Gastrocnemius medialis (tissue), 4 donors: ENCODE measurements at regions of chr11 and their contacts with region 1.

Region 1: DNA sequence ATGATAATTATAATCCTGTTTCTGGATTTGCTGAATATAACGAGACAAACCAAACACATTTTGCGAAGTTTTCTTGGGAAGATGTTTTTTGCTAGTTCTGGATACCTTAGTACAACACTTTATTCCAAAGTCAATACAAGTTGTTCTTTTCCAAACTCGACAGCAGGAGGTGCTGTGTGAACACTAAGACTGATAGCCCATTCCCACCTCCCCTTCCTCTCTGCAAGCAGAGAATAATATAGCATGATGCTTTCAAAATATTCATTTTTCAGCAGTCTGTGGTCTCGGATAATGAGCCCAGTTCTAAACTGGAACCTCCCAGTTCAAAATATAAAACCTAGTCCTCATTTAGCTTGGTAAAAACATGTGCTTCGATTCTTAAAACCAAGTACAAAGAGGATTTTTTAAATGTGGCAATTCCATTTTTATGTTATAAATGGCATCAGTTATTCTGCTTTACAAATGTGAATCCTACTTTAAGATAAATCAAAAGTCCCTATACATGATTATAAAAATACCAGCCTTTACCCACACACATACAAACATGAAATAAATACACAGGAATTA is 129.1 kb downstream of the DCDC1 start:
- DNase-seq: no peak
- ATAC-seq: no peak
- H3K4me3 ChIP-seq: no peak overlapping the region
- H3K27ac ChIP-seq: no peak overlapping the region
- H3K4me1 ChIP-seq: no peaks in the 10 kb centered on the region
- H3K27me3 ChIP-seq: no peaks in the 10 kb centered on the region
- CTCF ChIP-seq: peak in 1 of 5 experiments; percentile 36
- POLR2A ChIP-seq: no peak

Region 2: DNA sequence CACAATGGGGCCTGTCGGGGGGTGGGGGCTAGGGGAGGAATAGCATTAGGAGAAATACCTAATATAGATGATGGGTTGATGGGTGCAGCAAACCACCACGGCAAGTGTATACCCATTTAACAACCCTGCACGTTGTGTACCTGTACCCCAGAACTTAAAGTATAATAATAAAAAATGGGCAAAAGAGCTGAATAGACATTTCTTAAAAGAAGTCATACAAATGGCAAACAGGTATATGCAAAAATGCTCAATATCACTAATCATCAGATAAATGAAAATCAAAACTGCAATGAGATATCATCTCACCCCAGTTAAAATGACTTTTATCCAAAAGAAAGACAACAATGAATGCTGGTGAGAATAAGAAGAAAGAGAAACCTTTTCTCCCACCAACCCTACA is 290.6 kb before region 1 on chr11:
- in situ Hi-C with region 1: no loop called
- intact Hi-C with region 1: no loop called
- DNase-seq: no peak
- ATAC-seq: no peak
- H3K4me3 ChIP-seq: no peak overlapping the region
- H3K27ac ChIP-seq: no peak overlapping the region
- H3K4me1 ChIP-seq: no peaks in the 10 kb centered on the region
- H3K27me3 ChIP-seq: no peaks in the 10 kb centered on the region
- CTCF ChIP-seq: no peak
- POLR2A ChIP-seq: no peak

Region 3: GRCh38 chr11:31387379-31387778 is 147.0 kb after region 1 on chr11:
- in situ Hi-C with region 1: no loop called
- intact Hi-C with region 1: loop called (anchors 5 kb)
- DNase-seq: no peak
- ATAC-seq: no peak
- H3K4me3 ChIP-seq: no peak overlapping the region
- H3K27ac ChIP-seq: no peak overlapping the region
- H3K4me1 ChIP-seq: no peaks in the 10 kb centered on the region
- H3K27me3 ChIP-seq: no peaks in the 10 kb centered on the region
- CTCF ChIP-seq: no peak
- POLR2A ChIP-seq: no peak

Region 4: DNA sequence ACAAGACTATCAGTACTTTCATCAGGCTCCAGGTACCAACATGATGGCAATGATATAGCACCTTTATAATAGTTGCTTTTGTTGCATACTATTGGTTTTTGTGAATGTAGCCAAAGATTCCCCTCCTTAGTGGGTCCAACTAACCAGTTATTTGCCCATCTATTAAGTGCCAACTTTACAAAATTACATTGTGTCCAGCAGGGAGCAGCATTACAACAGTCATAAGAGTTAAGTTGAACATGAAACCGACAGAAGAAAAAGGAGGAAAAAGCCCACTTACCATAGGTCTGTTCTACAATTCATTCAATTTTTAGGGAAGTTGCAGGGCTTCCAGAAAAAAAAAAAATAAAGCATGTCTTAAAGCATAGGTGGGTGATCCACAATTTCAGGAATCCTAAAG is 247.4 kb after region 1 on chr11:
- in situ Hi-C with region 1: loop called in 1 of 4 experiments (anchors 25 kb)
- intact Hi-C with region 1: no loop called
- DNase-seq: no peak
- ATAC-seq: no peak
- H3K4me3 ChIP-seq: no peak overlapping the region
- H3K27ac ChIP-seq: no peak overlapping the region
- H3K4me1 ChIP-seq: peaks cover 8 to 10% of the 10 kb centered on the region in 2 donors
- H3K27me3 ChIP-seq: no peaks in the 10 kb centered on the region
- CTCF ChIP-seq: no peak
- POLR2A ChIP-seq: no peak

Region 5: GRCh38 chr11:31509429-31510345 is 269.3 kb after region 1 on chr11 and contains the starts of genes ELP4 and IMMP1L:
- in situ Hi-C with region 1: no loop called
- intact Hi-C with region 1: loop called (anchors 10 kb)
- DNase-seq: peak; percentile 97
- ATAC-seq: peak; percentile 99 to 100
- H3K4me3 ChIP-seq: peak within 1 kb of the TSS; percentile 89 to 98 (median 97)
- H3K27ac ChIP-seq: peak within 1 kb of the TSS; percentile 80 to 90 (median 90)
- H3K4me1 ChIP-seq: peaks cover 17 to 26% of the 10 kb centered on the region in 2 donors
- H3K27me3 ChIP-seq: no peaks in the 10 kb centered on the region
- CTCF ChIP-seq: no peak
- POLR2A ChIP-seq: peak; percentile 45 to 49
- total RNA-seq, gene ELP4: 8.8 to 23.6 (median 13.5) TPM
- total RNA-seq, gene IMMP1L: 14.2 to 30.6 (median 23.7) TPM

Region 6: GRCh38 chr11:31810779-31811647 is 570.6 kb after region 1 on chr11 and contains the start of gene PAX6:
- in situ Hi-C with region 1: no loop called
- intact Hi-C with region 1: loop called (anchors 10 kb)
- DNase-seq: peak in 1 of 2 donors; percentile 16
- ATAC-seq: no peak
- H3K4me3 ChIP-seq: peak within 1 kb of the TSS; percentile 42 to 68 (median 53)
- H3K27ac ChIP-seq: no peak within 1 kb of the TSS
- H3K4me1 ChIP-seq: peaks cover 56 to 65% of the 10 kb centered on the region in 2 donors
- H3K27me3 ChIP-seq: peaks cover 97 to 100% (median 100%) of the 10 kb centered on the region in 3 donors
- CTCF ChIP-seq: no peak
- POLR2A ChIP-seq: no peak
- total RNA-seq, gene PAX6: not detected

Region 7: DNA sequence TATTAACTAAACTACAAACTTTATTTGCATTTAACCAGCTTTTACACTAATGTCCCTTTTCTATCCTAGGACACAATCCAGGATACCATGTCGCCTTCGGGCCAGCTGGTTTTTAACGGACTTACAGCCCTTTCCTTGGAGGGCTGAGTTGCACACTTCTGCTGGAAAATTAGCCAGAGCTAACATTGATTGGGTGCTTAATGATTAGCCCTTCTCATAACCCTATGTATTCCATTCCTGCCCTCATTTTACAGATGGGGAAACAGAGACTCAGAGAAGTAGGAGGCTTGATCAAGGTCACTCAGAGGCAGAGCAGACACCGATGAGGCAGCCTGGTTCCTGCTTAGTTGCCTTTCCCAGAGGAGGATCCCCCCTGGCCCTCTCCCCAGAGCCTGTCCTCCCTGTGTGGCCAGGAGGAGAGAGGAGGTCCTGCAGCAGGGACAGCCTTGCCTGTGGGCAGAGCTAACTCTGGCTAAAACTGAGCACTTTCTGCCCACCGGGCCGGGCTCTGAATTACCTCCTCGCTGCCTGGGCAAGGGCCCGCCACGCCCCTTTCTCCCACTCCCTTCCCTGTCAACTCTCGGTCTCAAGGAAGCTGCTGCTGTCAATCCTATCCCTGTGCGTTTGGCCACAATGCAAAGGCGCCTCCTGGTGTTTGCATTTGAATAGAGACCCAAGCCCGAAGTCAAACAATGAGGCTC is 630.3 kb after region 1 on chr11:
- in situ Hi-C with region 1: loop called in 1 of 4 experiments (anchors 10 kb)
- intact Hi-C with region 1: loop called (anchors 5 kb)
- DNase-seq: peak; percentile 5 to 14
- ATAC-seq: no peak
- H3K4me3 ChIP-seq: no peak overlapping the region
- H3K27ac ChIP-seq: no peak overlapping the region
- H3K4me1 ChIP-seq: no peaks in the 10 kb centered on the region
- H3K27me3 ChIP-seq: peaks cover 0 to 3% (median 0%) of the 10 kb centered on the region in 3 donors
- CTCF ChIP-seq: peak; percentile 23 to 60 (median 43)
- POLR2A ChIP-seq: no peak